WTC11 (cell line): ENCODE measurements at regions of chr12 and their contacts with region 1.

Region 1: GRCh38 chr12:17204289-17205054 is 598.5 kb upstream of the LMO3 start:
- DNase-seq: peak; percentile 14
- ATAC-seq: peak; percentile 59
- H3K4me3 Mint-ChIP-seq: no peak overlapping the region
- H3K27ac Mint-ChIP-seq: no peak overlapping the region
- H3K4me1 Mint-ChIP-seq: peaks cover 11% of the 10 kb centered on the region
- H3K27me3 Mint-ChIP-seq: no peaks in the 10 kb centered on the region
- CTCF ChIP-seq: no peak

Region 2: DNA sequence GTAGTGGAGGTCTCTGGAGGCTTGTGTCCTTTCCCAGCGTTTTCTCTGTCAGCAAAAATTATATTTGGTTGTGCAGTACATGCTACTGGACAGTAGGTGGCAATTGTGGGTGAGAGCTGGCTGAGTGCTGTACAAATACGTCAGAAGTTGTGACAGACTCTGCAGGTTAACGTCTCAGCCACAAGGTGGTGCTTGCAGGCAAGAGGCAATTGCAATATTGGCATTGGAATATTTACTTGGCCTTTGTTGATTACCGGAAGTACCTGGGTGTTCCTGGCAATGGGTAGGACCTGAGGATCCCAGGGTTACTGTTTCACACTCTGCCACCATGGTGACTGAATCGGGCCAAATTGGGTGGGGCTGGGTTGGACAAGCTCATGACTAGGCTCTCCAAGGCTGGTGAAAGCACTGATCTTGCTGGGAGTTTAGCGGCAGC is 264.6 kb before region 1 on chr12:
- CTCF ChIA-PET with region 1: interaction called, 19 read pairs
- POLR2A ChIA-PET with region 1: interaction called, 4 read pairs
- DNase-seq: peak; percentile 74
- ATAC-seq: peak; percentile 99
- H3K4me3 Mint-ChIP-seq: no peak overlapping the region
- H3K27ac Mint-ChIP-seq: no peak overlapping the region
- H3K4me1 Mint-ChIP-seq: no peaks in the 10 kb centered on the region
- H3K27me3 Mint-ChIP-seq: no peaks in the 10 kb centered on the region
- CTCF ChIP-seq: peak; percentile 90

Region 3: GRCh38 chr12:17079251-17079909 is 125.1 kb before region 1 on chr12:
- CTCF ChIA-PET with region 1: interaction called, 11 read pairs
- POLR2A ChIA-PET with region 1: no interaction called
- DNase-seq: no peak
- ATAC-seq: peak; percentile 71
- H3K4me3 Mint-ChIP-seq: no peak overlapping the region
- H3K27ac Mint-ChIP-seq: no peak overlapping the region
- H3K4me1 Mint-ChIP-seq: peaks cover 26% of the 10 kb centered on the region
- H3K27me3 Mint-ChIP-seq: no peaks in the 10 kb centered on the region
- CTCF ChIP-seq: no peak